ENCODE measurements at regions of chr12 and their contacts with region 1.

Region 1: GRCh38 chr12:57899010-57899662 is 42.2 kb upstream of the ATP23 start:
- DNase-seq: peak; percentile 85 to 96 (median 86)
- H3K4me3 ChIP-seq: peak overlapping the region in 1 of 2 donors; percentile 22
- H3K4me3 Mint-ChIP-seq: peak overlapping the region; percentile 73 to 91 (median 84)
- H3K27ac ChIP-seq: peak overlapping the region; percentile 82
- H3K27ac Mint-ChIP-seq: peak overlapping the region; percentile 99 to 100 (median 100)
- H3K4me1 ChIP-seq: peaks cover 62% of the 10 kb centered on the region
- H3K4me1 Mint-ChIP-seq: peaks cover 50 to 56% (median 53%) of the 10 kb centered on the region in 4 donors
- H3K27me3 ChIP-seq: no peaks in the 10 kb centered on the region
- H3K27me3 Mint-ChIP-seq: no peaks in the 10 kb centered on the region

Region 2: GRCh38 chr12:57759360-57759980 is 139.7 kb before region 1 on chr12:
- CTCF ChIA-PET with region 1: interaction called, 45 read pairs
- POLR2A ChIA-PET with region 1: interaction called, 8 read pairs
- intact Hi-C with region 1: loop called (anchors 2 kb)
- DNase-seq: peak in 4 of 5 donors; percentile 47 to 65 (median 56)
- H3K4me3 ChIP-seq: no peak overlapping the region
- H3K4me3 Mint-ChIP-seq: peak overlapping the region in 3 of 8 donors; percentile 39 to 70 (median 64)
- H3K27ac ChIP-seq: no peak overlapping the region
- H3K27ac Mint-ChIP-seq: peak overlapping the region in 5 of 7 donors; percentile 32 to 82 (median 79)
- H3K4me1 ChIP-seq: peaks cover 33% of the 10 kb centered on the region
- H3K4me1 Mint-ChIP-seq: peaks cover 25 to 54% (median 35%) of the 10 kb centered on the region in 4 donors
- H3K27me3 ChIP-seq: no peaks in the 10 kb centered on the region
- H3K27me3 Mint-ChIP-seq: peaks cover 3 to 6% of the 10 kb centered on the region in 2 donors

Region 3: DNA sequence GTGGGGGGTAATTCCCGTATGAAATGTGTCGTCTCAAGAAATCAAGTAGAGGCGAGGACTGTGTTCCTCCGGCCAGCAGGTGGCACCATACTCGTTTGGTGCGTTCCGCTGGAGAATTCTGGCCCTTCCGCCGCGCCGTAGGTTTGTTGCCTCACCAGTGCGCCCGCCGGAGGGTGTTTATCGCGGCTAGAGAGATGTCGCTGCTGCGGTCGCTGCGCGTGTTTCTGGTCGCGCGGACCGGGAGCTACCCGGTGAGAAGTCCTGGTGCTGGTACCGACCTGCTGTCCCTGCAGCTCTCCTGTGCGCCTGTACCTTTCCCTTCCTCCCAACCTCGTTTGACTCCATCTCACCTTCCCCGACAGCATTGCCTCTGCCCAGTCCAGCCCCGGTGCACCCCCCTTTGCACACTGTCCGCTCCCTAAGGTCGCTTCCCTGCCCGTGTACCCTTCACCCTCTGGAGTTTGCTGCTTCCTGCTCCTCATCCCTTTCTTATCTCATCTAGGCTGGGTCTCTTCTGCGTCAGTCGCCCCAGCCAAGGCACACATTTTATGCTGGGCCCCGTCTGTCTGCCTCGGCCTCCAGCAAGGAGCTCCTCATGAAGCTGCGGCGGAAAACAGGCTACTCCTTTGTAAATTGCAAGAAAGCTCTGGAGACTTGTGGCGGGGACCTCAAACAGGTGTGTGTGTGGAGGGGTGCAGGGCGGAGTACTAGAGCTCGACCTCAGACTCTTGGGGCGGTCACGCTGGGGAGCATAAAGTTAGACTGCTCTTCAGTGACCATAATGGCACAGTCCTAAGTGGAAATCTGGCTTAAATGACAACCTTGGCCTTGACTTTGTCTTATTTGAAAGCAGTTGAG is 116.3 kb before region 1 on chr12 and contains the start of gene TSFM:
- CTCF ChIA-PET with region 1: interaction called, 42 read pairs
- POLR2A ChIA-PET with region 1: interaction called, 4 read pairs
- intact Hi-C with region 1: loop called (anchors 1 kb)
- DNase-seq: peak; percentile 93 to 96 (median 94)
- H3K4me3 ChIP-seq: peak within 1 kb of the TSS; percentile 92 to 97
- H3K4me3 Mint-ChIP-seq: peak within 1 kb of the TSS; percentile 95 to 100 (median 98)
- H3K27ac ChIP-seq: peak within 1 kb of the TSS; percentile 73
- H3K27ac Mint-ChIP-seq: peak within 1 kb of the TSS; percentile 95 to 100 (median 99)
- H3K4me1 ChIP-seq: peaks cover 59% of the 10 kb centered on the region
- H3K4me1 Mint-ChIP-seq: peaks cover 46 to 57% (median 50%) of the 10 kb centered on the region in 4 donors
- H3K27me3 ChIP-seq: no peaks in the 10 kb centered on the region
- H3K27me3 Mint-ChIP-seq: no peaks in the 10 kb centered on the region
- total RNA-seq, gene TSFM: 18.9 to 22.2 TPM

Region 4: DNA sequence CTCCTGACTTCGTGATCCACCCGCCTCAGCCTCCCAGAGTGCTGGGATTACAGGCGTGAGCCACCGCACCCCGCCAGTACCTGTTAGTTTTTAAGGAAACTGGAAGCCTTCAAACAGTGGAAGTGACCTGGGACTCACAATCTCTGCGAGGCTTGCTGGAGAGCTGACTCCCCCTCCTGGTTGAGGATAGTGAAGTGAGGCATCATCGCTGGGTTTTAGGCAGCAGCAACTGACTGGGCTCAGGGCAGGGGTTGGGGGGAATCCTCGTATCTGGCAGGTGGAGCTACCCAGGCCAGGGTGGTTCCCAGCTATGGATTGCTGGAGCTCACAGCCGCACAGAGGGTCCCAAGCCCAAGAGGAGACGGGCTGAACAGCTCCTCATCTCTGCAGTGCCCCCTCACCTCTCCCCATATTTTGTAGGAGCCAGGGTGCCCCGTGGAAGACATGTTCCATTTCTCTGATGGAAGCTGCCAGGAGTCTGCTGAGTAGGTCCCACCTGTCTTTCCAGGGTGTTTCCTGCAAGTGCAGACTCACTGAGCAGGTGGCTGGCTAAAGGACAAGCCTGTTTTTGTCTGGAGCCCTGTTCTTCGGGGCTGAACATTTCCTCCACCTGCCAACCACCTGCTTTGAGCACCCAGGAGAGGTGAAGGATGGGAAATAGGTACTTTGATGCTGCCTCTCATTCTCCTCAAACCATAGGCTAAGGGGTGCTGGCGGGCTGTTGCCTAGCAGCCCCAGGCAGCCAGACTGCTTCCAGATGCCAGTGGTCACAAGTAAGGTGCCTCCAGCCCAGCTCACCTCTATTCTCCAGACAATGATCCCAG is 83.7 kb before region 1 on chr12:
- CTCF ChIA-PET with region 1: interaction called, 16 read pairs
- POLR2A ChIA-PET with region 1: interaction called, 12 read pairs
- intact Hi-C with region 1: no loop called
- DNase-seq: no peak
- H3K4me3 ChIP-seq: no peak overlapping the region
- H3K4me3 Mint-ChIP-seq: no peak overlapping the region
- H3K27ac ChIP-seq: no peak overlapping the region
- H3K27ac Mint-ChIP-seq: peak overlapping the region in 1 of 7 donors; percentile 41
- H3K4me1 ChIP-seq: no peaks in the 10 kb centered on the region
- H3K4me1 Mint-ChIP-seq: peaks cover 0 to 8% (median 5%) of the 10 kb centered on the region in 4 donors
- H3K27me3 ChIP-seq: no peaks in the 10 kb centered on the region
- H3K27me3 Mint-ChIP-seq: no peaks in the 10 kb centered on the region

Region 5: DNA sequence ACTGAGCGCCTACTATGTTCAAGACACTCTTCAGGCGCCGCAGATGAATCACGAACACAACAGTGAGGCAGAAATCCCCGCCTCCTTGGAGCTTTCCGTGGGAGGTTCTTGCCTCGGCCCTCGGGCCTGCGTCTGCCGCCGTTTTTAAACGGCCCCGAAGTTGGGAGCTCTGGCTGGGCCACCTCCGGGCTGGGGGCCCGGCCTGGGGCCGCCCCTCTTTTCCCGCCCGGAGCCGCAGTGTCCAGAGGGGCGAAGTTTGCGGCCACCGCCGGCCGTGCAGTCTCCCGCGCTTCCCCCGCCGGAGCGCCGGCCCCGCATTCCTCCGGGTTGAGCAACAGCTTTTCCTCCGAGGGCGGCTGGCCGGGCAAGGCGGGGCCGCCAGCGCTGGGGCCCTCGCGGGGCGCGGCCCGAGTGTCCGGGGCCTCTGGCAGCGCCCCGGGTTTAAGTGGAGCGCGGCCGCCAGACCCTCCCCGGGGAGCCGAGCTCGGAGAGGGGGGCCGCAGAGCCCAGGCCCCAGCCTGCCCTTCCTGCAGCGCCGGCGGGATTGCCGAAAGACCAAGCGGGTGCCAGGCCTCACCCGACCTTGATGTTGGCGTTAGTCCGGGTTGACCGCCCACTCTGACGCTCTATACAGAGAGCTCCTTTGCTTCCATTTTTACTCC is 33.9 kb before region 1 on chr12:
- CTCF ChIA-PET with region 1: interaction called, 6 read pairs
- POLR2A ChIA-PET with region 1: interaction called, 13 read pairs
- intact Hi-C with region 1: loop called (anchors 2 kb)
- DNase-seq: peak; percentile 28 to 68 (median 31)
- H3K4me3 ChIP-seq: peak overlapping the region in 1 of 2 donors; percentile 51
- H3K4me3 Mint-ChIP-seq: peak overlapping the region; percentile 76 to 93 (median 86)
- H3K27ac ChIP-seq: no peak overlapping the region
- H3K27ac Mint-ChIP-seq: peak overlapping the region in 2 of 7 donors; percentile 8 to 64
- H3K4me1 ChIP-seq: peaks cover 12% of the 10 kb centered on the region
- H3K4me1 Mint-ChIP-seq: peaks cover 4 to 10% (median 7%) of the 10 kb centered on the region in 4 donors
- H3K27me3 ChIP-seq: no peaks in the 10 kb centered on the region
- H3K27me3 Mint-ChIP-seq: peaks cover 1 to 11% of the 10 kb centered on the region in 2 donors